ENCODE measurements at regions of chr17 and their contacts with region 1.

Region 1: GRCh38 chr17:46212634-46213435 is 19.6 kb upstream of the KANSL1 start:
- DNase-seq: peak in 2 of 3 donors; percentile 43 to 72
- ATAC-seq: peak; percentile 73 to 82
- H3K4me3 ChIP-seq: no peak overlapping the region
- H3K27ac ChIP-seq: no peak overlapping the region
- H3K4me1 ChIP-seq: no peaks in the 10 kb centered on the region
- H3K27me3 ChIP-seq: no peaks in the 10 kb centered on the region

Region 2: DNA sequence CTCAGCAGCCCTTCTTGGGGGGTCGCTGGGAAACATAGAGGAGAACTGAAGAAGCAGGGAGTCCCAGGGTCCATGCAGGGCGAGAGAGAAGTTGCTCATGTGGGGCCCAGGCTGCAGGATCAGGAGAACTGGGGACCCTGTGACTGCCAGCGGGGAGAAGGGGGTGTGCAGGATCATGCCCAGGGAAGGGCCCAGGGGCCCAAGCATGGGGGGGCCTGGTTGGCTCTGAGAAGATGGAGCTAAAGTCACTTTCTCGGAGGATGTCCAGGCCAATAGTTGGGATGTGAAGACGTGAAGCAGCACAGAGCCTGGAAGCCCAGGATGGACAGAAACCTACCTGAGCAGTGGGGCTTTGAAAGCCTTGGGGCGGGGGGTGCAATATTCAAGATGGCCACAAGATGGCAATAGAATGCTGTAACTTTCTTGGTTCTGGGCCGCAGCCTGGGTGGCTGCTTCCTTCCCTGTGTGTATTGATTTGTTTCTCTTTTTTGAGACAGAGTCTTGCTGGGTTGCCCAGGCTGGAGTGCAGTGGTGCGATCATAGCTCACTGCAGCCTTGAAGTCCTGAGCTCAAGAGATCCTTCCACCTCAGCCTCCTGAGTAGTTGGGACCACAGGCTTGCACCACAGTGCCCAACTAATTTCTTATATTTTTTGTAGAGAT is 210.4 kb before region 1 on chr17:
- intact Hi-C with region 1: loop called (anchors 2 to 5 kb)
- DNase-seq: peak; percentile 48 to 81 (median 73)
- ATAC-seq: peak; percentile 73 to 82
- H3K4me3 ChIP-seq: no peak overlapping the region
- H3K27ac ChIP-seq: no peak overlapping the region
- H3K4me1 ChIP-seq: no peaks in the 10 kb centered on the region
- H3K27me3 ChIP-seq: no peaks in the 10 kb centered on the region